Mammary epithelial cell (primary cell): ENCODE measurements at regions of chr21 and their contacts with region 1.

Region 1: DNA sequence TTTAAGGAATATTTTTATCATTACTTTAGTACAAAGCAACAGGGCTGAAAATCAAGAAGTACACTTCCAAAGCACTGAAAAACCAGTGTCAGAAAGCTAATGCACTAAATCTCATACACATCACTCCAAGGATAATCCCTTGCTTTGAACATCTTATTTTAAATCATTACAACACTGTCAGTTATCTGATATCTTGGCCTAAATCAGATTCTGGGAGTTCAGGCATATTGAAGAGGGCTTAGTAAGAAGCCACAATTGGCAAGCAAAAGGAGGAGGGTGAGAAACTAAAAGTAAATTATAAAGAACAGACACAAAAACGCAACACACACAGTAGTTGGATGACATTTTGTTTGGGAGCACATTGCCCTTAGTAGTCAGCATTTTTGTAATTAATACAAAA is 448.4 kb downstream of the PCP4 start:
- DNase-seq: no peak
- H3K4me3 ChIP-seq: no peak overlapping the region
- H3K27ac ChIP-seq: no peak overlapping the region
- H3K4me1 ChIP-seq: no peaks in the 10 kb centered on the region
- H3K27me3 ChIP-seq: no peaks in the 10 kb centered on the region
- CTCF ChIP-seq: no peak

Region 2: GRCh38 chr21:40270047-40270446 is 45.6 kb before region 1 on chr21:
- CTCF ChIA-PET with region 1: no interaction called
- dilution Hi-C with region 1: no loop called
- in situ Hi-C with region 1: no loop called
- intact Hi-C with region 1: no loop called
- DNase-seq: no peak
- H3K4me3 ChIP-seq: no peak overlapping the region
- H3K27ac ChIP-seq: no peak overlapping the region
- H3K4me1 ChIP-seq: no peaks in the 10 kb centered on the region
- H3K27me3 ChIP-seq: no peaks in the 10 kb centered on the region
- CTCF ChIP-seq: no peak

Region 3: GRCh38 chr21:40331172-40331571 is 15.5 kb after region 1 on chr21:
- CTCF ChIA-PET with region 1: interaction called, 19 read pairs
- dilution Hi-C with region 1: no loop called
- in situ Hi-C with region 1: no loop called
- intact Hi-C with region 1: no loop called
- DNase-seq: no peak
- H3K4me3 ChIP-seq: no peak overlapping the region
- H3K27ac ChIP-seq: no peak overlapping the region
- H3K4me1 ChIP-seq: no peaks in the 10 kb centered on the region
- H3K27me3 ChIP-seq: no peaks in the 10 kb centered on the region
- CTCF ChIP-seq: no peak